Endothelial cell of umbilical vein (primary cell): ENCODE measurements at regions of chr20 and their contacts with region 1.

Region 1: DNA sequence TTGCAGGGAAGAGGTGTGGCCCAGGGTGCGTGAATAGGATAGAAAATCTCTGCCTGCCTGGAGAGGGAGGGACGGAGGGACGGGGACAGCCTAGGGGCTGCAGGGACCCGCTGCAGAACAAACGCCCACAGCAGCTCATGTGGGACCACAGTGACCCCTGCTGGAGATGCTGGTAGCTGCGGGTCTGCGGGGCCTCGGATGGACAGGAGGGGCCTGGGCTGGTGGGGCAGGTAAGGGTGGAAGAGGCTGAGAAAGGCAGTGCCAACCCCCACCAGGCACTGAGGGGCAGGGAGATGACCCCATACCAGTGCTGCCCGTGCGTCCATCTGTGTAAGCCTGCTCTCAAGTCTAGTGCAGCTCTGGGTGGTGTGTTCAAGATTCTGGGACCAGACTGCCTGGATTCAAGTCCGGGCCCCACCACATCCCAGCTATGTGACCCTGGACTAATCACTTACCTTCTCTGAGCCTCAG is 39.4 kb downstream of the KIAA1755 start:
- DNase-seq: peak; percentile 60
- H3K4me3 ChIP-seq: no peak overlapping the region
- H3K27ac ChIP-seq: no peak overlapping the region
- H3K4me1 ChIP-seq: peaks cover 13% of the 10 kb centered on the region
- H3K27me3 ChIP-seq: no peaks in the 10 kb centered on the region
- CTCF ChIP-seq: peak; percentile 94 to 97
- POLR2A ChIP-seq: no peak

Region 2: GRCh38 chr20:37651932-37652331 is 569.2 kb before region 1 on chr20:
- CTCF ChIA-PET with region 1: no interaction called
- POLR2A ChIA-PET with region 1: no interaction called
- dilution Hi-C with region 1: no loop called
- intact Hi-C with region 1: loop called (anchors 1 kb)
- DNase-seq: peak; percentile 42
- H3K4me3 ChIP-seq: no peak overlapping the region
- H3K27ac ChIP-seq: no peak overlapping the region
- H3K4me1 ChIP-seq: no peaks in the 10 kb centered on the region
- H3K27me3 ChIP-seq: peaks cover 0 to 1% of the 10 kb centered on the region in 2 experiments
- CTCF ChIP-seq: peak; percentile 30 to 66
- POLR2A ChIP-seq: no peak

Region 3: DNA sequence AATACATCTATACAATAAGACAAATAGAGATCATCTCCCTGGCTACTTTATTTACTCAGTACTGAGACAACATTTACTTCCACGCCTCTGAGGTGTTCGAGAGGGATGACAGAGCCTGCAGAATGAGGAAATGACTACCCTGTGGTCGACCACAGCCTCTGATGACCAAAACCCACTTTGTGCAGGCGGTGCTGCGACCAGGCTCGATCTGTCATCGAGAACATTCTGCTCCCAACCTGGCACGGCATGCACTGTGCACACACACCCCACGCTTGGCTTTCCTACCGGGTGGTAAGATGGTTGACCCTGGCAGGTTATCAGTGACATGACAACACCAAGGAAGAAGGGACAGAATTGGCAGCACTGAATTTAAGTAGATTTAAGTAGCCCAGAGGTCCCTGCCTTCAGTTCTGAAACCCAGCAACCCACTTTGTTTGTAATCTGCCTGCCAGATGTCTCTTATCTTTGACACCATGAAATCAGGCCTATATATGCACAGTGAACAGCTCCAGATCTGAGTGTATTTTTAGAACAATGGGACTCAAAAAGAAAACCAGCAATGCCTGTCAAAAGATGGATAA is 230.5 kb before region 1 on chr20:
- CTCF ChIA-PET with region 1: interaction called, 5 read pairs
- POLR2A ChIA-PET with region 1: no interaction called
- dilution Hi-C with region 1: no loop called
- intact Hi-C with region 1: loop called (anchors 5 kb)
- DNase-seq: peak; percentile 59
- H3K4me3 ChIP-seq: no peak overlapping the region
- H3K27ac ChIP-seq: peak overlapping the region; percentile 68
- H3K4me1 ChIP-seq: peaks cover 24% of the 10 kb centered on the region
- H3K27me3 ChIP-seq: no peaks in the 10 kb centered on the region
- CTCF ChIP-seq: no peak
- POLR2A ChIP-seq: no peak

Region 4: DNA sequence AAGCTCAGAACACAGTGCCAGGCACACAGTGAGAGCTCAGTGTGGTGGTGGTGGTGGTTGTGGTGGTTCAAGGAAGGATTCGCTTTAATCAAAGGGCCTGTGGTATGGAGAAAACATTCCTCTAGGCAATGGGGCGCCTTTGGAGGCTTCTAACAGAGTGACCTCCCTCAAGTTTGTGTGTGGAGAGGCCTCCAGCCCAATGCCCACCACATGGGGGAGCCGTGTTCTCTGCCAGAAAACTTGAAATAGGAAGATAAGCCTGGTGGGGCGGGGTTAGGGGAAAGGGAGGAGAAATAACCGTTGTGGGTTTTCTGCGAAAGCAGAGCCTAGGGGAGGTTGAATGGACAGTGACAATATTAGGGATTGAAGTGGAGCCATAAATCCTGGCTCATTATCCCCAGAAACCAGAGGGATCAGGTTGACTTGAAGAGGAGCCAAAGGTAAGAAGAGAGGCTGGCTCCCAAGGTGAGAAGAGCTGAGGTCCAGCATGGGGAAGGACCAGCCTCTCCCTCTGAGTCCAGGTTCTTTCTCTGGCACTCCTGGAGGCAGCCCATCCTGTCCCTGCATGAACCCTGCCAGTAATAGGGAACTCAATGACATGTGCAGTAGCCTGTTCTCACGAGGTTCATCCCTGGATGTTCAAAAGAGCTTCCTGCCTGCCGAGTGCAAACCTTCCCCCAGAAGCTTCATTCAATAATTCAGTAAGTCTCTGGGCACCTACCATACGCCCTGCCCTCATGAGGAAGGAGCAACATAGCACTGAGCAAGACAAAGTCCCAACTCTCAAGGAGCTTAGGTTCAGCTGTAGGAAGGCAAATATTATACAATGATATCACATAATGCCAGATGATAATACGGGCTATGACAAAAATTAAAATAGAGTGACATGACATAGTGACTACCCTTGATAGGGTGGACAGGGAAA is 107.5 kb before region 1 on chr20:
- CTCF ChIA-PET with region 1: interaction called, 11 read pairs
- POLR2A ChIA-PET with region 1: no interaction called
- dilution Hi-C with region 1: no loop called
- intact Hi-C with region 1: loop called (anchors 2 kb)
- DNase-seq: no peak
- H3K4me3 ChIP-seq: no peak overlapping the region
- H3K27ac ChIP-seq: peak overlapping the region; percentile 10
- H3K4me1 ChIP-seq: peaks cover 61% of the 10 kb centered on the region
- H3K27me3 ChIP-seq: no peaks in the 10 kb centered on the region
- CTCF ChIP-seq: peak; percentile 27 to 50
- POLR2A ChIP-seq: no peak

Region 5: DNA sequence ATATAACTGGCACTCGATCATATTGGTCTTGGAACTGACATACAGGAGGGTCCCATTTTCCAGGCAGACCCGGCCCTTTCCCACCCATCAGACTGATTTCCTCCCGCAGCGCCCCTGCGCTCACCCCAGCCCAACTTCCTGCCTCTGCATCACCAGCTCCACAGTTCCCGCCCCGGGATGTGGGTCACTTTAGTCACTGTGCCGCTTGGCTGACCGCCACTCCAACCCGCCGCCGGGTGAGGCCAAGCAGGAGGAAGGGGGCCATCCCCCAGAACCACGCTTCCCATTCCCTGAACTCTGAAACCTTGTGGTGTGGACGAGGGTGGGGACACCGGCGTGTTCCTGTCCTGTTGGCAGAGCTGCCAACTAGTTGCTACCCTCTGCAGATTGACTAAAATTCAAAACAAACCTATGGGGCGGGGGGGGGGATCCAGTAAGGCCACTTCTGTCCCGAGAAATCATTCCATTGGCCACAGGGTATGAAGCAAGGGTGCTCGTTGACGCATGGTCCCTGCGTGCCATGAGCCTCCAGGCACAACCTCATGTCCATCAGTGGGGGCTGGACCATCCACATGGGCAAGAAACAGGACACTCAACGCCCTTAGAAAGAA is 68.4 kb before region 1 on chr20:
- CTCF ChIA-PET with region 1: interaction called, 42 read pairs
- POLR2A ChIA-PET with region 1: no interaction called
- dilution Hi-C with region 1: no loop called
- intact Hi-C with region 1: no loop called
- DNase-seq: peak; percentile 96
- H3K4me3 ChIP-seq: peak overlapping the region in 1 of 3 experiments; percentile 15
- H3K27ac ChIP-seq: peak overlapping the region; percentile 100
- H3K4me1 ChIP-seq: peaks cover 90% of the 10 kb centered on the region
- H3K27me3 ChIP-seq: no peaks in the 10 kb centered on the region
- CTCF ChIP-seq: no peak
- POLR2A ChIP-seq: no peak

Region 6: GRCh38 chr20:38304845-38305447 is 83.8 kb after region 1 on chr20:
- CTCF ChIA-PET with region 1: interaction called, 204 read pairs
- POLR2A ChIA-PET with region 1: no interaction called
- dilution Hi-C with region 1: no loop called
- intact Hi-C with region 1: no loop called
- DNase-seq: peak; percentile 30
- H3K4me3 ChIP-seq: no peak overlapping the region
- H3K27ac ChIP-seq: no peak overlapping the region
- H3K4me1 ChIP-seq: no peaks in the 10 kb centered on the region
- H3K27me3 ChIP-seq: peaks cover 2% of the 10 kb centered on the region in 2 experiments
- CTCF ChIP-seq: peak; percentile 40 to 70
- POLR2A ChIP-seq: no peak

Region 7: GRCh38 chr20:38373231-38373867 is 152.2 kb after region 1 on chr20:
- CTCF ChIA-PET with region 1: no interaction called
- POLR2A ChIA-PET with region 1: no interaction called
- dilution Hi-C with region 1: no loop called
- intact Hi-C with region 1: no loop called
- DNase-seq: peak; percentile 36
- H3K4me3 ChIP-seq: no peak overlapping the region
- H3K27ac ChIP-seq: no peak overlapping the region
- H3K4me1 ChIP-seq: no peaks in the 10 kb centered on the region
- H3K27me3 ChIP-seq: peaks cover 14 to 17% of the 10 kb centered on the region in 2 experiments
- CTCF ChIP-seq: no peak
- POLR2A ChIP-seq: no peak

Region 8: GRCh38 chr20:39206899-39207564 is 985.9 kb after region 1 on chr20:
- CTCF ChIA-PET with region 1: no interaction called
- POLR2A ChIA-PET with region 1: no interaction called
- dilution Hi-C with region 1: no loop called
- intact Hi-C with region 1: no loop called
- DNase-seq: no peak
- H3K4me3 ChIP-seq: no peak overlapping the region
- H3K27ac ChIP-seq: no peak overlapping the region
- H3K4me1 ChIP-seq: no peaks in the 10 kb centered on the region
- H3K27me3 ChIP-seq: no peaks in the 10 kb centered on the region
- CTCF ChIP-seq: no peak
- POLR2A ChIP-seq: no peak